GM12878 (cell line): ENCODE measurements at regions of chr2 and their contacts with region 1.

Region 1: GRCh38 chr2:3558205-3559014 is at the start of gene RNASEH1:
- DNase-seq: peak; percentile 85
- ATAC-seq: peak; percentile 95
- H3K4me3 ChIP-seq: peak within 1 kb of the TSS; percentile 78
- H3K27ac ChIP-seq: peak within 1 kb of the TSS; percentile 78
- H3K4me1 ChIP-seq: peaks cover 10% of the 10 kb centered on the region
- H3K27me3 ChIP-seq: no peaks in the 10 kb centered on the region
- CTCF ChIP-seq: no peak
- EP300 ChIP-seq: no peak
- POLR2A ChIP-seq: peak; percentile 94
- RAD21 ChIP-seq: no peak
- polyA plus RNA-seq, gene RNASEH1: 24.6 to 25.7 TPM

Region 2: DNA sequence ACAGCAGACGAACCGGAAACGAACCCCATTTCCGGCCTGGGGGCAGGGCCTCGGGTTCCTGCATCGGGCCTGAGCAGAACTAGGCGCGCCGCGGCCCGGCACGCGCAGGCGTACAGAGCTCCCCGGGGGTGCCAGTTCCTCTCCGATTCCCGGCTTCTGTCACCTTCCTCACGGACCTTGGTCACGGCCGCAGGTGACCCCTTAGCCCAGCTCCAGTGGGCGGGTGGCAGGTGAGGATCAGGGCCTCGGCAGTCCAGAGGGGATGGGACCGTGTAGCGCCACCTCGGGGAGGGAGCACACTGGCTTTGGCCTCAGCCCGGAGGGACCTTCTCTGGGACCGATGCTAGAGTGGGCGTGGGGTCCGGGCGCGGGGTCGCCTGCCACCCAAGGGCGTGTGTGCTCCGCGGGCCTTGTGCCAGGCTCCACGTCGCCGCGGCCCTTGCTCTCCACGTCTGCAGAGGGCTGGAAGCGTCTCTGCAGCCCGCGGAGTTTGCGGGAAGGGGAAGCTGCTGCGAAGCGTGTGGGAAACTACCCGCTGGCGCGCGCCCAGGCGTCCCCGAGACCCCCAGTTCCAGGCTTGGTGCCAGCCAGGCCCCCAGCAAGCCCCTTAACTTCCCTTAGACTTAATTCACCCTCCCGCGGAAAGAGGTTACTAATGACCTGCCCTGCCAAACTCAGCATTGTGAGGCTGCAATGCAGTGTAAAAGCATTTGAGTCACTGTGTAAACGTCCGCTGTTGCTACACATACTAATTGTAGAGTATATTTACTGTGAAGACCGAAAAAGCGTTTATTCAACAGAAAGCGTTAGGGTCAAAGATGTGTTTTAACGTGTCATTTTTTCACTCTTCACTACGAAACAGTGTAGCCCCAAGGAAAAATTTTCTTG is 178.5 kb before region 1 on chr2 and contains the start of gene TRAPPC12:
- CTCF ChIA-PET with region 1: interaction called, 3 read pairs
- POLR2A ChIA-PET with region 1: interaction called, 3 read pairs
- RAD21 ChIA-PET with region 1: no interaction called
- SMC1A ChIA-PET with region 1: no interaction called
- in situ Hi-C with region 1: no loop called
- intact Hi-C with region 1: loop called (anchors 1 kb)
- DNase-seq: peak; percentile 69
- ATAC-seq: peak; percentile 87
- H3K4me3 ChIP-seq: peak within 1 kb of the TSS; percentile 77
- H3K27ac ChIP-seq: peak within 1 kb of the TSS; percentile 86
- H3K4me1 ChIP-seq: peaks cover 11% of the 10 kb centered on the region
- H3K27me3 ChIP-seq: no peaks in the 10 kb centered on the region
- CTCF ChIP-seq: peak; percentile 39 to 55 (median 47)
- EP300 ChIP-seq: no peak
- POLR2A ChIP-seq: peak; percentile 99
- RAD21 ChIP-seq: 0 out of 2 replicates have a peak, but pooled peaks have one; percentile 13
- polyA plus RNA-seq, gene TRAPPC12: 8.6 to 22.9 TPM

Region 3: GRCh38 chr2:3518496-3519254 is 39.7 kb before region 1 on chr2:
- CTCF ChIA-PET with region 1: no interaction called
- POLR2A ChIA-PET with region 1: interaction called, 8 read pairs
- RAD21 ChIA-PET with region 1: interaction called, 5 read pairs
- SMC1A ChIA-PET with region 1: interaction called, 7 read pairs
- in situ Hi-C with region 1: no loop called
- intact Hi-C with region 1: loop called (anchors 1 kb)
- DNase-seq: peak; percentile 94
- ATAC-seq: peak; percentile 89
- H3K4me3 ChIP-seq: peak overlapping the region; percentile 69
- H3K27ac ChIP-seq: peak overlapping the region; percentile 87
- H3K4me1 ChIP-seq: peaks cover 6% of the 10 kb centered on the region
- H3K27me3 ChIP-seq: no peaks in the 10 kb centered on the region
- CTCF ChIP-seq: no peak
- EP300 ChIP-seq: no peak; a peak in 1 of 4 replicates
- POLR2A ChIP-seq: peak; percentile 93
- RAD21 ChIP-seq: no peak

Region 4: GRCh38 chr2:3535467-3535793 is 23.0 kb before region 1 on chr2:
- CTCF ChIA-PET with region 1: no interaction called
- POLR2A ChIA-PET with region 1: no interaction called
- RAD21 ChIA-PET with region 1: no interaction called
- SMC1A ChIA-PET with region 1: no interaction called
- in situ Hi-C with region 1: no loop called
- intact Hi-C with region 1: no loop called
- DNase-seq: no peak
- ATAC-seq: no peak
- H3K4me3 ChIP-seq: no peak overlapping the region
- H3K27ac ChIP-seq: no peak overlapping the region
- H3K4me1 ChIP-seq: no peaks in the 10 kb centered on the region
- H3K27me3 ChIP-seq: no peaks in the 10 kb centered on the region
- CTCF ChIP-seq: no peak
- EP300 ChIP-seq: no peak
- POLR2A ChIP-seq: no peak
- RAD21 ChIP-seq: no peak

Region 5: GRCh38 chr2:3683748-3684454 is 125.5 kb after region 1 on chr2:
- CTCF ChIA-PET with region 1: no interaction called
- POLR2A ChIA-PET with region 1: no interaction called
- RAD21 ChIA-PET with region 1: no interaction called
- SMC1A ChIA-PET with region 1: no interaction called
- in situ Hi-C with region 1: no loop called
- intact Hi-C with region 1: no loop called
- DNase-seq: no peak
- ATAC-seq: no peak
- H3K4me3 ChIP-seq: no peak overlapping the region
- H3K27ac ChIP-seq: no peak overlapping the region
- H3K4me1 ChIP-seq: no peaks in the 10 kb centered on the region
- H3K27me3 ChIP-seq: no peaks in the 10 kb centered on the region; a peak in 1 of 4 replicates
- CTCF ChIP-seq: 0 out of 6 replicates have a peak, but pooled peaks of 1 of the 3 experiments have one; percentile 4
- EP300 ChIP-seq: no peak
- POLR2A ChIP-seq: no peak
- RAD21 ChIP-seq: 0 out of 2 replicates have a peak, but pooled peaks have one; percentile 17

Region 6: DNA sequence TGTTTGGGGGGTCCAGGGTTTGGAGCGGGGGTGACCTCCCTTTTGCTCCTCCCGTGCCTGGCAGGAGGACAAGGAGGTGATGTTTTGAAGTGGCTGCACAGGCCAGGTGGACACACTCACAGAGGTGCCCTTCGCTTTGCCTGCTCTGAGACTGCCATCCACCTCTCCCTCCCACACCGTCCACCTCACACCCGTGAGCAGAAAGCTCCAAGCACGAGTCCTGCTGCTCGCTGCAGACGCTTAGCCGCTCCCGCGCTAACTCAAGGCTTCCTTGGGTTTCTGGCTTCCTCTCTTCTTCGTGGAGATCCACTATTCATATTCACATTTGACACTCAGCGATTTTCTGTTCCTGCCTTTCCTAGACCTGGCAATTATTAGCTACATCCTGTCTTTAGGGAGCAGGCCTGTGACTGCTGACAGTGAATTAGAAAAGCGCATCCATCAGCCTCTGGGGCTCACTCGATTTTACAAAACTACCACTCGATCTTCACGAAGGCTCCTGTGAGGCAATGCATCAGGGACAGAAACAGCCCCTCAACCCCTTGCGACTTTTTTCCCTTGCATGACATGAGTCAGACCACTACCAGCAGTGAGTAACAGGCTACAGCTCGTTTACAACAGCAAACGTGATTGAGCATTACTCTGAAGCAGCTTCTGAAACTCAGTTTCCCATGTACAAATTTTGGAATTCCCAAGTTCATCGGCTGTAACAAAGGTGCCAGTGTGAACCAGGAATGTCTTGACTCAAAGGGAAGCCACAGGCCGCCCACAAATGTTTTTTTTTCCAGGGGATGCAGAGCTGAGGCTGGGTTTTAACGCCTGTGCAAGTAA is 1895.0 kb after region 1 on chr2:
- CTCF ChIA-PET with region 1: no interaction called
- POLR2A ChIA-PET with region 1: no interaction called
- RAD21 ChIA-PET with region 1: no interaction called
- SMC1A ChIA-PET with region 1: no interaction called
- in situ Hi-C with region 1: no loop called
- intact Hi-C with region 1: no loop called
- DNase-seq: no peak
- ATAC-seq: no peak
- H3K4me3 ChIP-seq: no peak overlapping the region
- H3K27ac ChIP-seq: no peak overlapping the region
- H3K4me1 ChIP-seq: no peaks in the 10 kb centered on the region
- H3K27me3 ChIP-seq: no peaks in the 10 kb centered on the region
- CTCF ChIP-seq: no peak
- EP300 ChIP-seq: no peak
- POLR2A ChIP-seq: no peak
- RAD21 ChIP-seq: no peak